Natural killer cell (primary cell): ENCODE measurements at regions of chr17 and their contacts with region 1.

Region 1: GRCh38 chr17:58447039-58447975 is 30.0 kb upstream of the RNF43 start:
- DNase-seq: peak; percentile 56 to 80
- ATAC-seq: peak; percentile 77 to 94 (median 89)
- H3K4me3 ChIP-seq: no peak overlapping the region
- H3K4me3 Mint-ChIP-seq: no peak overlapping the region
- H3K27ac ChIP-seq: no peak overlapping the region
- H3K27ac Mint-ChIP-seq: no peak overlapping the region
- H3K4me1 ChIP-seq: no peaks in the 10 kb centered on the region
- H3K4me1 Mint-ChIP-seq: peaks cover 5% of the 10 kb centered on the region in 2 donors
- H3K27me3 ChIP-seq: no peaks in the 10 kb centered on the region
- H3K27me3 Mint-ChIP-seq: no peaks in the 10 kb centered on the region
- CTCF ChIP-seq: peak; percentile 77

Region 2: DNA sequence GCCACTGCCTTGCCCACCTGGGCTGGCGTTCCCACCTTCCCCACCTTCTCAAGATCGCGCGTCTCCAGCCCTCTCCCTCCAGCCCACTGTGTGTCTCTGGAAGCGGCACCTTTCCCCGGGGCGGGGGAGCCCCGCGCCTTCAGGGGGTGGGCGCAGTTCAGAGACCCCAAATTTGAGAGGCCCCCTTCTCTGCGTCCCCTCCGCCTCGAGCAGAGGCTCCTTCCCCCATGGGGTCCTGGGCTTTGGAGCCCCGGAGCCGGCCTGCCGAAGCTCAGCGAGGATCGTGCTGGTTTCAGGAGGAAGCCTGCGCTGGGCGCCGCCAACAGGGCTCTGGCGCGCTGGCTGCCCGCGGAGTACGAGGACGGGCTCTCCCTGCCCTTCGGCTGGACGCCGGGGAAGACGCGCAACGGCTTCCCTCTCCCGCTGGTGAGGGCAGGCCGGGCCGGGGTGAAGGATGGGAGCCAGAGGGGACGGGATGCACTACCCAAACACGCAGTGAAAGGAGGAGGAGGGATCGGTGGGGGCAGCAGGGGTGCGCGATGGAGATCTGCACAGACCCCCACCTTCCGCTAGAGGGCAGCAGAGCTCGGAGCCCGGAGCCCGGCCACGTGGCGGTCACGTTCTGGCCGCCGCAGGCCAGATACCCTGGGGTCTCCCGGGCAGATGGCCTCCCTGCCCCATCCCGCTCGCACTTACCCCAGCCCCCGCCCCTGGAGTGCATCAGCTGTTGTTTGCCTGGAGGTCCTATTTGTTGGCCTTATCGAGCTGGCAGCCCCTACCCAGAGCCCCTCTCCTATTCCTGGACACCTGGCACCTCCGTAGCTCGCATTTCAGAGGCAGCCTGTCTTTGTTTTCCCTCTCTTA is 197.8 kb before region 1 on chr17:
- intact Hi-C with region 1: loop called (anchors 5 kb)
- DNase-seq: peak; percentile 76 to 85
- ATAC-seq: peak; percentile 94 to 99 (median 98)
- H3K4me3 ChIP-seq: peak overlapping the region; percentile 53
- H3K4me3 Mint-ChIP-seq: peak overlapping the region; percentile 77
- H3K27ac ChIP-seq: no peak overlapping the region
- H3K27ac Mint-ChIP-seq: no peak overlapping the region
- H3K4me1 ChIP-seq: peaks cover 33% of the 10 kb centered on the region
- H3K4me1 Mint-ChIP-seq: peaks cover 17 to 31% of the 10 kb centered on the region in 2 donors
- H3K27me3 ChIP-seq: peaks cover 5% of the 10 kb centered on the region
- H3K27me3 Mint-ChIP-seq: peaks cover 10 to 31% of the 10 kb centered on the region in 2 donors
- CTCF ChIP-seq: peak; percentile 97

Region 3: DNA sequence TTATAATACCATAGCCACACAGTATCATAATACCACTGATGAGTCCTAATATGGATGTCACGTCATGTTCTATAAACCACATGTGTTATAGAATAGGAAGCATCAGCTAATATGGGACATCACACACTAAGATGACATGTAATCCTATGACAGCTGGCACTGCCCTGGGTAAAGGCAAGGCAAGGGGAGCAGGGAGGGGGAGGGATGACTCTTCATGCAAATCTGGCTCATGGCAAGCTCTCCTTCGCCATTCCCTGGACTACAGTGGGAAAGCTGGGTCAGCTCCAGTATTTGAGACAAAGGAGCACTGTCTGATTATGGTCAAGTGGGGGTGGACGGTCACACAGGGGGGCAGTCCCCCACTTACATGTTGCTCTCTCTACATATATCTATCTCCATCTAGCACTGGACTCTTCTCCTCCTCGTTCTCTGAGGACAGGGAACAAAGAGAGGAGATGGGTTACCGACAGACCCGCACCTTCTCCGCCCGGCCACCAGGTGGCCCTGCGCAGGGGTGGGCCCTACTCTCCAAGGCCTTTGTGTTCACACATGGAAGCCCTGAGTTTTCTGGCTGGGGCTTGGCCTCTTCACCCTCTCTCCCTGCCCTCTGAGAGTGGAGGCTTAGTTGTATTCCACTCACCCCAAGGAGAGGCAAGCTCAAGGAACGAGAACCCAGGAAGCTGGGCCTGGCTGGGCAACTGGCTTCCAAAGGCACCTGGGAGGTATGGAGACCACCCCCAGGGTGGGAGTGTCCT is 143.2 kb before region 1 on chr17:
- intact Hi-C with region 1: loop called (anchors 1 kb)
- DNase-seq: peak; percentile 55 to 78
- ATAC-seq: peak; percentile 79 to 98 (median 85)
- H3K4me3 ChIP-seq: no peak overlapping the region
- H3K4me3 Mint-ChIP-seq: no peak overlapping the region
- H3K27ac ChIP-seq: no peak overlapping the region
- H3K27ac Mint-ChIP-seq: peak overlapping the region in 1 of 2 donors; percentile 38
- H3K4me1 ChIP-seq: peaks cover 22% of the 10 kb centered on the region
- H3K4me1 Mint-ChIP-seq: peaks cover 0 to 15% of the 10 kb centered on the region in 2 donors
- H3K27me3 ChIP-seq: no peaks in the 10 kb centered on the region
- H3K27me3 Mint-ChIP-seq: no peaks in the 10 kb centered on the region
- CTCF ChIP-seq: peak; percentile 76